Heart right ventricle (tissue), 16 donors: ENCODE measurements at regions of chr18 and their contacts with region 1.

Region 1: DNA sequence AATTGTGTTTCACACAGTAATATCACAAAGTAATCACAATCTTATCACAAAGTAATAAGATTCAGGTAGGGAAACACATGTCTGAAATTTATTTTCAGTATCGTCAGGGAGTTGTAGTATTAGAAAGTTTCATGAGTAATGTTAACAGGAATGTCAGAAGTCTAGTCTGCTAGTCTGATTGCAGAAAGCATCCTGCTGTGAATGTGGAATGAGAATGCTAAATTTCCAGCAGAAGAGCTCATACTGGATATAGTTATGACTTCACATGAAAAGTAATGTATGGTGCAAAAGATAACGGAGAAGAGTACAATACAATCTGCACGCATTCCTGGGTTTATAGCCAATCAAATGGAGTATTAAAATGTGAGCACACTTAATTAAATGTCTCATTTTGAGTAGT is 494.7 kb upstream of the SETBP1 start:
- DNase-seq: no peak
- ATAC-seq: no peak
- H3K4me3 ChIP-seq: no peak overlapping the region
- H3K27ac ChIP-seq: no peak overlapping the region
- H3K4me1 ChIP-seq: no peaks in the 10 kb centered on the region
- H3K27me3 ChIP-seq: no peaks in the 10 kb centered on the region
- CTCF ChIP-seq: no peak

Region 2: GRCh38 chr18:44213293-44213692 is 27.3 kb after region 1 on chr18:
- intact Hi-C with region 1: loop called in 1 of 10 experiments (anchors 1 kb)
- DNase-seq: no peak
- ATAC-seq: no peak
- H3K4me3 ChIP-seq: no peak overlapping the region
- H3K27ac ChIP-seq: no peak overlapping the region
- H3K4me1 ChIP-seq: no peaks in the 10 kb centered on the region
- H3K27me3 ChIP-seq: no peaks in the 10 kb centered on the region
- CTCF ChIP-seq: no peak

Region 3: DNA sequence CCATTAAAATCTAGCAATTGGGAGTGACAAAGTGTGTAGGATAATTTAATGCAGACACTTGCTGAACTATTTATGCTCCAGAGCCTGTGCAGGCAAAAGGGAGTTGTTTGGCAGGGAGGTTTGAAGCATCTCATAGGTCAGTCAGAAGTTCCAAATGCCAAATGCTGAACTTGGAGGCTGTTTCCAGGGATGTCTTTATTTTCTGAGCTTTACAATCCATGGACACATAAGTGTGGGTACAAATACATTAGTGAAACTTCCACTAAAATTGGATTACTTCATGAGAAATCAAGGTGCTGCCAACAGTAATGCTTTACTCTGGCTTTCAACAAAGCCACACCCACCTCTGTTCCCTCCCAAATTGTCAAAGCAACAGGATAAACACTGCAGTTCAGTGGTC is 72.6 kb after region 1 on chr18:
- intact Hi-C with region 1: no loop called
- DNase-seq: no peak
- ATAC-seq: no peak
- H3K4me3 ChIP-seq: no peak overlapping the region
- H3K27ac ChIP-seq: no peak overlapping the region
- H3K4me1 ChIP-seq: no peaks in the 10 kb centered on the region
- H3K27me3 ChIP-seq: no peaks in the 10 kb centered on the region
- CTCF ChIP-seq: no peak